ENCODE measurements at regions of chr16 and their contacts with region 1.

Region 1: GRCh38 chr16:1363501-1364041 is 11.8 kb downstream of the GNPTG start:
- DNase-seq: peak; percentile 60 to 71 (median 68)
- H3K4me3 ChIP-seq: no peak overlapping the region
- H3K4me3 Mint-ChIP-seq: no peak overlapping the region
- H3K27ac ChIP-seq: no peak overlapping the region
- H3K27ac Mint-ChIP-seq: peak overlapping the region; percentile 8 to 81 (median 61)
- H3K4me1 ChIP-seq: peaks cover 4% of the 10 kb centered on the region
- H3K4me1 Mint-ChIP-seq: peaks cover 0 to 6% (median 2%) of the 10 kb centered on the region in 4 donors
- H3K27me3 ChIP-seq: no peaks in the 10 kb centered on the region
- H3K27me3 Mint-ChIP-seq: no peaks in the 10 kb centered on the region

Region 2: GRCh38 chr16:1351582-1352362 is 11.8 kb before region 1 on chr16 and contains the starts of genes GNPTG and TSR3:
- CTCF ChIA-PET with region 1: interaction called, 12 read pairs
- POLR2A ChIA-PET with region 1: interaction called, 5 read pairs
- intact Hi-C with region 1: no loop called
- DNase-seq: peak; percentile 82 to 91 (median 85)
- H3K4me3 ChIP-seq: peak within 1 kb of the TSS; percentile 32 to 82
- H3K4me3 Mint-ChIP-seq: peak within 1 kb of the TSS; percentile 80 to 90 (median 84)
- H3K27ac ChIP-seq: peak within 1 kb of the TSS; percentile 75
- H3K27ac Mint-ChIP-seq: peak within 1 kb of the TSS; percentile 82 to 96 (median 91)
- H3K4me1 ChIP-seq: peaks cover 23% of the 10 kb centered on the region
- H3K4me1 Mint-ChIP-seq: peaks cover 18 to 52% (median 29%) of the 10 kb centered on the region in 4 donors
- H3K27me3 ChIP-seq: no peaks in the 10 kb centered on the region
- H3K27me3 Mint-ChIP-seq: no peaks in the 10 kb centered on the region
- total RNA-seq, gene GNPTG: 58.7 to 61.5 TPM
- total RNA-seq, gene TSR3: 38.1 to 40.3 TPM

Region 3: GRCh38 chr16:1374418-1375297 is 11.1 kb after region 1 on chr16:
- CTCF ChIA-PET with region 1: interaction called, 11 read pairs
- POLR2A ChIA-PET with region 1: no interaction called
- intact Hi-C with region 1: no loop called
- DNase-seq: no peak
- H3K4me3 ChIP-seq: no peak overlapping the region
- H3K4me3 Mint-ChIP-seq: no peak overlapping the region
- H3K27ac ChIP-seq: no peak overlapping the region
- H3K27ac Mint-ChIP-seq: no peak overlapping the region
- H3K4me1 ChIP-seq: peaks cover 9% of the 10 kb centered on the region
- H3K4me1 Mint-ChIP-seq: peaks cover 4 to 14% (median 6%) of the 10 kb centered on the region in 4 donors
- H3K27me3 ChIP-seq: no peaks in the 10 kb centered on the region
- H3K27me3 Mint-ChIP-seq: no peaks in the 10 kb centered on the region

Region 4: GRCh38 chr16:1413684-1414531 is 50.3 kb after region 1 on chr16:
- CTCF ChIA-PET with region 1: interaction called, 3 read pairs
- POLR2A ChIA-PET with region 1: interaction called, 3 read pairs
- intact Hi-C with region 1: loop called (anchors 1 kb)
- DNase-seq: peak; percentile 52 to 74 (median 59)
- H3K4me3 ChIP-seq: peak overlapping the region in 1 of 2 donors; percentile 75
- H3K4me3 Mint-ChIP-seq: peak overlapping the region; percentile 78 to 89 (median 85)
- H3K27ac ChIP-seq: peak overlapping the region; percentile 68
- H3K27ac Mint-ChIP-seq: peak overlapping the region; percentile 80 to 91 (median 88)
- H3K4me1 ChIP-seq: peaks cover 20% of the 10 kb centered on the region
- H3K4me1 Mint-ChIP-seq: peaks cover 2 to 31% (median 18%) of the 10 kb centered on the region in 4 donors
- H3K27me3 ChIP-seq: no peaks in the 10 kb centered on the region
- H3K27me3 Mint-ChIP-seq: no peaks in the 10 kb centered on the region

Region 5: DNA sequence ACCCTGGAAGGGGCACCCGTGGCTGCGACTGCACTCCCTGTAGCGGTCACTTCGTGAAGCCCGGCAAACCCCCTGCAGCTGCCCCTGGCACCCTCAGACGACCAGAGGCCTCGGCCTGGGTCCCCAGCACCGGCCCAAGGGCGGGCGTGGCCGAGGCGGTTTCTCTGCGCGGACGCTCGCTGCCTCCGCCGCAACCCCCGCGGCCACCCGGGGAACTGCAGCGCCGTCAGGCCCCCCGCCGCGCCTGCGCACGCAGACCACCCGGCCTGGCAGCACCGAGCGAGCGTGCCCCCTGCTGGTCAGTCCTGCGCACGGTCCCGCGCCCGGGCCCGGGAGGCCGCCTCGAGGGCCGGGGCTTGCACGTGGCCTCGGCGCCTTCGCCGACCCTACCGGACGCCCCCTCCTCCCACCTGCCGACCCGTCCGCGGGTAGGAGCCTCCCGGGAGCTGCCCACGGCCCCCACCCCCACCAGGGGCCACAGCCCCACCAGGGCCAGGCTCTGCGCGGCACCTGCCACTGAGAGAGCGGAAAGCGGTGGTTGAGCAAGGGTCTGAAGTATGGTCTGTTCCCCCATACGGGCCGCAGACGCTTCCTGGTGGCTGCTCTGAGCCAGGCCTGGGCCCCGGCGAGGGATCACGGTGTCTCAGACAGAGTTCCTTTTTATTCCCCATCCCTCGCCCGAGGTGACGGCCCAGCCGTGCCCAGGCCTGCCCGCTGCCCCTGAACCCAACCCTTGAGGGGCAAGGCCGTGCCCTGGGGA is 566.2 kb after region 1 on chr16:
- CTCF ChIA-PET with region 1: no interaction called
- POLR2A ChIA-PET with region 1: interaction called, 3 read pairs
- intact Hi-C with region 1: loop called (anchors 5 kb)
- DNase-seq: peak; percentile 82 to 92 (median 90)
- H3K4me3 ChIP-seq: peak overlapping the region in 1 of 2 donors; percentile 28
- H3K4me3 Mint-ChIP-seq: peak overlapping the region in 4 of 8 donors; percentile 39 to 68 (median 52)
- H3K27ac ChIP-seq: peak overlapping the region; percentile 13
- H3K27ac Mint-ChIP-seq: no peak overlapping the region
- H3K4me1 ChIP-seq: peaks cover 6% of the 10 kb centered on the region
- H3K4me1 Mint-ChIP-seq: peaks cover 2 to 4% (median 4%) of the 10 kb centered on the region in 4 donors
- H3K27me3 ChIP-seq: no peaks in the 10 kb centered on the region
- H3K27me3 Mint-ChIP-seq: no peaks in the 10 kb centered on the region

Measured in CD4-positive, alpha-beta memory T cell (primary cell).